ENCODE measurements at regions of chr3 and their contacts with region 1.

Region 1: GRCh38 chr3:136075218-136075808 is 109.8 kb downstream of the PPP2R3A start:
- DNase-seq: peak; percentile 30 to 77
- ATAC-seq: peak; percentile 71 to 87 (median 80)
- H3K4me3 ChIP-seq: no peak overlapping the region
- H3K27ac ChIP-seq: peak overlapping the region in 7 of 10 donors; percentile 6 to 54 (median 34)
- H3K4me1 ChIP-seq: peaks cover 2 to 39% (median 20%) of the 10 kb centered on the region in 9 donors
- H3K27me3 ChIP-seq: no peaks in the 10 kb centered on the region
- CTCF ChIP-seq: peak; percentile 84 to 97 (median 92)

Region 2: DNA sequence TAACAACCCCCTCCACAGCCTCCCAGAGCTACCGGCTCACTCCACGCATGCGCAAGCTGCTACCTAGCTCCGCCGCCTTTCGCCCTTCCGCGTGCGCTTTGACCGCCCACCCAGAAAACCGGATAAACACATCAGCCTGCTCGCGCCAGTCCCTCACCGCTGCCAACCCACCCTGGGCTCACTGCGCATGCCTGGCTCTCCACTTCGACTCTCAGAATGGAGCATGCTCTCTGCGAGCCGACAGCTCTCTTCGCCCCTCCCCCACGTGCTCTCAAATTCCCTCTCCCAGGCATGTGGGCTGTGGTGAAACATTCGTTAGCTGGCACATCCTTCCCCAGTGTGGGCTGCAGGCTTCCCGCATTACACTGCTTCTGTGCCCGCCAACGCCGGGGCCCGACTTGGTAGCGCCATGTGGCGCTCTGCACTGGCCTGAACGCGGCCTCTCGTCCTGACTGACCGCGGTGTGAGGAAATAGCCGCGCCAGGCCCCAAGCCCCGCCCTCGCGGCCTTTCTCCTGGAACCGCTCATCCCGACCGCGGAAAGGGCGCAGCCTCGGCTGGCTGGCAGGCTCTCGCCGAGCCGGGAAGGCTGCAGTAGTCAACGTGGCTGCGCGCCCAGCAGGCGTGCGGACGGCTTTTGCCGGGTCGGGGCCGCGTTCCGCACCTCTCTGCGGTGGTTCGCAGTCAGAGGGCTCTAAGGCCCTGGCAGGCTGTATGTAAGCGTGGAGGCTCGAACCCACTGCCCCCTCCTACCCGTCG is 121.3 kb after region 1 on chr3:
- intact Hi-C with region 1: loop called in 7 of 10 experiments (anchors 5 to 10 kb)
- DNase-seq: peak; percentile 99
- ATAC-seq: peak; percentile 89 to 96 (median 94)
- H3K4me3 ChIP-seq: peak overlapping the region; percentile 70 to 95 (median 80)
- H3K27ac ChIP-seq: peak overlapping the region; percentile 98 to 100 (median 100)
- H3K4me1 ChIP-seq: peaks cover 3 to 39% (median 31%) of the 10 kb centered on the region in 9 donors
- H3K27me3 ChIP-seq: no peaks in the 10 kb centered on the region
- CTCF ChIP-seq: peak in 1 of 9 donors; percentile 10

Region 3: DNA sequence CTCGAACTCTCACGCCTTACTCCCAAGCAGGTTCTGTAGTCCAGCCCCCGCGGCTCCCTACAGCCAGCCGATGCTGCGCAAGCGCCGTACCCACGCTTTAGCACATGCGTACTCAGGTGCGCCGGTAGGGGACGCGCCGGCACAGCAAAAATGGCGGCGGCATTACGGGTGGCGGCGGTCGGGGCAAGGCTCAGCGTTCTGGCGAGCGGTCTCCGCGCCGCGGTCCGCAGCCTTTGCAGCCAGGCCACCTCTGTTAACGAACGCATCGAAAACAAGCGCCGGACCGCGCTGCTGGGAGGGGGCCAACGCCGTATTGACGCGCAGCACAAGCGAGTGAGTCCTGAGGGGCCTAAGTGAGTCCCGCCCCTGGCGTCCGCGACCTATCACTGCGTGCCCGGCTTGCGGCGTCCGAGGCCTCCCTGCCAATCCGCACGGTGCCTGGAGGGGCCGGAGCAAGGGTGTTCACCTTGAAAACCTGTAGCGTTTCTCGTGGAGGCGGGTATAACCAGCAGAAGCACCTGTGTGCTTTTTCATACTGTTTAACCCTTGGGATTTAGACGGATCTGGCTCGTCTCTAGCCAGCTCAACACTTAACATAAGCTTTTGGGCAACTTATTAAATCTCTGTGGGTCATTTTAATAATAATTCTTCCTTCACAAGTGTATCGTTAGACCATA is 175.1 kb after region 1 on chr3 and contains the start of gene PCCB:
- intact Hi-C with region 1: loop called (anchors 2 to 10 kb)
- DNase-seq: peak; percentile 92 to 95
- ATAC-seq: peak; percentile 97 to 99 (median 99)
- H3K4me3 ChIP-seq: peak within 1 kb of the TSS; percentile 29 to 82 (median 70)
- H3K27ac ChIP-seq: peak within 1 kb of the TSS; percentile 66 to 95 (median 91)
- H3K4me1 ChIP-seq: peaks cover 0 to 23% (median 14%) of the 10 kb centered on the region in 9 donors
- H3K27me3 ChIP-seq: no peaks in the 10 kb centered on the region
- CTCF ChIP-seq: peak; percentile 65 to 96 (median 84)
- total RNA-seq, gene PCCB: 78.6 to 163 (median 132) TPM

Region 4: DNA sequence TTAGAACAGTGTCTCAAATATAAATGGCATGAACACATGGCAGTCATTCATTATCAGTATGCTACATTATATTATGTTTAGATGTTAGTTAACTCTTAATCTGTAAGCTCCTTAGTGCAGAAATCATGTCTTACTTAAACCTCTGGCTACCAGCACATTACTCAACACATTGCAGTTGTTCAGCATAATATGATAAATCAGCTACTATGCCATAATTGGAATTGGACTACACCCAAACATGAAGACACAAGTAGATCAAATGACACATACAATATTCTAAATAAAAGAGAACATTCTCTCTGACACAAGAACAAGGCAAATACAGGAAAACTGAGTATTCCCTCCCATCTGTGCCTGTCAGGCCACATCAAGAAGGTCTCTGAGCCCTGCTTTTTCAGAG is 291.0 kb after region 1 on chr3:
- intact Hi-C with region 1: loop called in 1 of 10 experiments (anchors 10 kb)
- DNase-seq: no peak
- ATAC-seq: no peak
- H3K4me3 ChIP-seq: no peak overlapping the region
- H3K27ac ChIP-seq: no peak overlapping the region
- H3K4me1 ChIP-seq: no peaks in the 10 kb centered on the region
- H3K27me3 ChIP-seq: no peaks in the 10 kb centered on the region
- CTCF ChIP-seq: no peak

Region 5: GRCh38 chr3:136385457-136385856 is 310.1 kb after region 1 on chr3:
- intact Hi-C with region 1: loop called in 3 of 10 experiments (anchors 10 kb)
- DNase-seq: no peak
- ATAC-seq: no peak
- H3K4me3 ChIP-seq: no peak overlapping the region
- H3K27ac ChIP-seq: no peak overlapping the region
- H3K4me1 ChIP-seq: peaks cover 0 to 6% (median 0%) of the 10 kb centered on the region in 9 donors
- H3K27me3 ChIP-seq: no peaks in the 10 kb centered on the region
- CTCF ChIP-seq: no peak

Region 6: GRCh38 chr3:136396916-136397315 is 321.6 kb after region 1 on chr3:
- intact Hi-C with region 1: loop called in 2 of 10 experiments (anchors 10 kb)
- DNase-seq: no peak
- ATAC-seq: no peak
- H3K4me3 ChIP-seq: no peak overlapping the region
- H3K27ac ChIP-seq: no peak overlapping the region
- H3K4me1 ChIP-seq: peaks cover 0 to 3% (median 0%) of the 10 kb centered on the region in 9 donors
- H3K27me3 ChIP-seq: no peaks in the 10 kb centered on the region
- CTCF ChIP-seq: no peak

Region 7: GRCh38 chr3:137013955-137014688 is 938.8 kb after region 1 on chr3:
- intact Hi-C with region 1: loop called (anchors 1 to 10 kb)
- DNase-seq: peak; percentile 88 to 91
- ATAC-seq: peak; percentile 94 to 98 (median 96)
- H3K4me3 ChIP-seq: peak overlapping the region in 9 of 10 donors; percentile 30 to 60 (median 57)
- H3K27ac ChIP-seq: peak overlapping the region in 7 of 10 donors; percentile 59 to 77 (median 68)
- H3K4me1 ChIP-seq: peaks cover 0 to 22% (median 5%) of the 10 kb centered on the region in 9 donors
- H3K27me3 ChIP-seq: no peaks in the 10 kb centered on the region
- CTCF ChIP-seq: peak; percentile 86 to 95 (median 93)